ENCODE measurements at regions of chr5 and their contacts with region 1.

Region 1: GRCh38 chr5:150700594-150701293 is at the start of gene RBM22:
- DNase-seq: peak; percentile 92
- ATAC-seq: peak; percentile 95
- H3K4me3 Mint-ChIP-seq: no peak within 1 kb of the TSS
- H3K27ac Mint-ChIP-seq: no peak within 1 kb of the TSS
- H3K4me1 Mint-ChIP-seq: peaks cover 2% of the 10 kb centered on the region; the same call in 1 of the 2 replicates
- H3K27me3 Mint-ChIP-seq: no peaks in the 10 kb centered on the region; the same call in 1 of the 2 replicates
- CTCF ChIP-seq: peak; percentile 44; the same call in 1 of the 2 replicates
- total RNA-seq, gene RBM22: 28.7 to 34.0 TPM (median 31.6 TPM) in 3 replicates

Region 2: DNA sequence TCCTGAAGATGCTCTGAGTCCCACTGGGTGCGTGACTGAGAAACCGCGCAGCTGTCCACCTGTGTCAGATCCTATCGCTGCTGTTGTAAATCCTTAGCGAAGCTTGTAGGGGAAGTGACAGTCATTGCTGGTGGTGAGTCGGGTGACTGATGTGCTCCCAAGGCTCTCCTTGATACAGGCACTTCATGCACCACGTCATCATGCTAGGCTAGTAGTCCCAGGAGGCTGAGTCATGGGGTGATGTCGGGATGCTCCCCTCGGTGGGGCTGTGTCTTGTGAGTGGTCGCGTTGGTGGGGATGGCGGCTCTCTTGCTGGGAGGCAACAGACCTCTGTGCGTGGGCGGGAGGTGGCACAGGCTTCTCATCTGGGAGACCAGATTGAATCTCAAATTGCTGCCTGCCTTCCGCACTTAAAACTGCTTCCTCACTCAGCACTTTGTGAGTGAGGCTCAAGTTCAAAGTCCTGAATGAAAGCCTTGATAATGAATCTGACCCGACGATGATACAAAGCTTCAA is 1234.2 kb before region 1 on chr5:
- CTCF ChIA-PET with region 1: no interaction called
- POLR2A ChIA-PET with region 1: no interaction called
- DNase-seq: no peak
- ATAC-seq: no peak
- H3K4me3 Mint-ChIP-seq: no peak overlapping the region
- H3K27ac Mint-ChIP-seq: no peak overlapping the region
- H3K4me1 Mint-ChIP-seq: peaks cover 4% of the 10 kb centered on the region; the same call in 1 of the 2 replicates
- H3K27me3 Mint-ChIP-seq: no peaks in the 10 kb centered on the region; the same call in 1 of the 2 replicates
- CTCF ChIP-seq: no peak

Region 3: GRCh38 chr5:150361301-150361700 is 339.4 kb before region 1 on chr5:
- CTCF ChIA-PET with region 1: no interaction called
- POLR2A ChIA-PET with region 1: no interaction called
- DNase-seq: no peak
- ATAC-seq: no peak
- H3K4me3 Mint-ChIP-seq: no peak overlapping the region
- H3K27ac Mint-ChIP-seq: no peak overlapping the region
- H3K4me1 Mint-ChIP-seq: peaks cover 17% of the 10 kb centered on the region
- H3K27me3 Mint-ChIP-seq: no peaks in the 10 kb centered on the region
- CTCF ChIP-seq: no peak

Region 4: GRCh38 chr5:150672237-150672883 is 28.4 kb before region 1 on chr5:
- CTCF ChIA-PET with region 1: interaction called, 19 read pairs
- POLR2A ChIA-PET with region 1: interaction called, 26 read pairs
- DNase-seq: peak; percentile 85
- ATAC-seq: peak; percentile 73
- H3K4me3 Mint-ChIP-seq: peak overlapping the region; percentile 84
- H3K27ac Mint-ChIP-seq: peak overlapping the region; percentile 96
- H3K4me1 Mint-ChIP-seq: peaks cover 31% of the 10 kb centered on the region
- H3K27me3 Mint-ChIP-seq: no peaks in the 10 kb centered on the region
- CTCF ChIP-seq: no peak

Region 5: DNA sequence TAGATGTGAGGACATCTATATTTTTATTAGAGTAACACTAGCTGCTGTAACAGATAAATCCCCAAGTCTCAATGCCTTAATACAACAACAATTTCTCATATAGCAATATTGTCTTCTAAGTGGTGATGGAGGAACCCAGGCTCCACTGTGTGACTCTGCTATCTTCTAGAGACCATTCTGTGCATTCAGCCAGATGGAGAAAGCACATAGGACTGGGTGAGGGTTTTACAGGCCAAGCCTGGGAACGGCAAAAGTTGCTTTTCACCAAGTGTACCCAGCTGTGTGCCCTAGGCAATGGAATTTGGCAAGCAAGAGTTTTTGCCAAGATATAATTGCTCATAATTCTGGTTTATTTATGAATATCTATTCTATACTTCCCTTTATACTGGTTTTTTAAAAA is 11.6 kb before region 1 on chr5:
- CTCF ChIA-PET with region 1: interaction called, 5 read pairs
- POLR2A ChIA-PET with region 1: interaction called, 10 read pairs
- DNase-seq: no peak
- ATAC-seq: no peak
- H3K4me3 Mint-ChIP-seq: no peak overlapping the region
- H3K27ac Mint-ChIP-seq: no peak overlapping the region
- H3K4me1 Mint-ChIP-seq: peaks cover 9% of the 10 kb centered on the region
- H3K27me3 Mint-ChIP-seq: no peaks in the 10 kb centered on the region
- CTCF ChIP-seq: no peak

Region 6: GRCh38 chr5:150758531-150759333 is 58.0 kb after region 1 on chr5 and contains the start of gene DCTN4:
- CTCF ChIA-PET with region 1: interaction called, 9 read pairs
- POLR2A ChIA-PET with region 1: interaction called, 11 read pairs
- DNase-seq: peak; percentile 92
- ATAC-seq: peak; percentile 96
- H3K4me3 Mint-ChIP-seq: no peak within 1 kb of the TSS
- H3K27ac Mint-ChIP-seq: no peak within 1 kb of the TSS
- H3K4me1 Mint-ChIP-seq: peaks cover 9% of the 10 kb centered on the region
- H3K27me3 Mint-ChIP-seq: peaks cover 37% of the 10 kb centered on the region
- CTCF ChIP-seq: no peak
- total RNA-seq, gene DCTN4: 41.1 to 43.9 TPM (median 43.2 TPM) in 3 replicates

Region 7: DNA sequence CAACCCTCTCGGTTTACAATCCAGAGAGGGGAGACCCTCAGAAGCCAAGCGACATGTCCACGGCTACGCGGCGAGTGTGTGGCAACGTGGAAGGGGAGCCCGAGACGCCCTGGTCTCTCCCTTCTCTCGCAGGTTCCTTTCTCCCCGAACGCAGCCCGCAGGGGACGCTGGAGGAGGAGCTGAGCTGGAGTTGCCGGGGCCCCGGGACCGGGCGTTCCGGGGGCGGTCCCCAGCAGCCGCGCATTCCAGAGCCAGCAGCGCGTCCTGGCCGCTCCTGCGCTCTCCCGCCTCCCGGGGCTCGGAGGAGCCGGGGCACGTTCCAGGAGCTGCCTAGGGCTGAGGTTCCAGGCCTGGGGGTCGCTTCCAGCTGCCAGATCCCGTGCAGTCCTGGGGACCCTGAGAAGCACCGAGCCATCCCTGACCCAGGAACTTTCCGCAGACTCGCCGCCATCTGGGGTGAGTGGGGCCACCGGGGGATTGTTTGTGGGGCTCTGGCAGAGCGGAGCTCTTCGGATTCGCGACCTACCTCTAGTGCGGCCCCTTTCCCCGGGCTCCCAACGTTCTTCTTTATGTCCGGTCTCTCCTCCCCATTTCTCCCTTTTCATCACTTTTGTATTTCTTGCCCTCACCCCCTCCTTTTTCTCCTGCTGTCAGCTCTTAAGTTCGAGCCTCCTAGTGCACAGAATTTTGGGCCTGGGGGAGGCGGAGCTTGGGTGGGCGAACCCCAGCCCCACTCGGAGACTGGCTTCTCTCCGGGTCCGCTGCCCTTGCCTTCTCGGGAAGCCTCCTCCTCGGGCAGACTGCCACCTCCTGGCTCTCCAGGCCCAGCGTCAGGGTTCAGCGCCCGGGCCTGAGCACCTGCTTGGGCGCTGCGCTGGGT is 78.0 kb after region 1 on chr5 and contains the start of gene SMIM3:
- CTCF ChIA-PET with region 1: interaction called, 15 read pairs
- POLR2A ChIA-PET with region 1: interaction called, 22 read pairs
- DNase-seq: peak; percentile 88
- ATAC-seq: peak; percentile 86
- H3K4me3 Mint-ChIP-seq: peak within 1 kb of the TSS; percentile 97
- H3K27ac Mint-ChIP-seq: peak within 1 kb of the TSS; percentile 95
- H3K4me1 Mint-ChIP-seq: peaks cover 49% of the 10 kb centered on the region
- H3K27me3 Mint-ChIP-seq: peaks cover 18% of the 10 kb centered on the region
- CTCF ChIP-seq: no peak
- total RNA-seq, gene SMIM3: 11.1 to 14.1 TPM (median 12.2 TPM) in 3 replicates

Region 8: GRCh38 chr5:150846654-150847333 is 146.1 kb after region 1 on chr5:
- CTCF ChIA-PET with region 1: interaction called, 31 read pairs
- POLR2A ChIA-PET with region 1: interaction called, 5 read pairs
- DNase-seq: peak; percentile 34
- ATAC-seq: peak; percentile 98
- H3K4me3 Mint-ChIP-seq: no peak overlapping the region
- H3K27ac Mint-ChIP-seq: no peak overlapping the region
- H3K4me1 Mint-ChIP-seq: peaks cover 8% of the 10 kb centered on the region; the same call in 1 of the 2 replicates
- H3K27me3 Mint-ChIP-seq: peaks cover 18% of the 10 kb centered on the region
- CTCF ChIP-seq: peak; percentile 57

Measured in WTC11 (cell line).